ENCODE measurements at regions of chr21 and their contacts with region 1.

Region 1: GRCh38 chr21:28336314-28336713 is 656.4 kb downstream of the LTN1 start:
- ATAC-seq: peak in 3 of 8 experiments; percentile 32 to 54 (median 41)
- H3K4me3 ChIP-seq: no peak overlapping the region
- H3K27ac ChIP-seq: no peak overlapping the region
- H3K4me1 ChIP-seq: no peaks in the 10 kb centered on the region

Region 2: GRCh38 chr21:26850108-26850643 is 1486.1 kb before region 1 on chr21:
- in situ Hi-C with region 1: loop called in 3 of 9 experiments (anchors 25 kb)
- ATAC-seq: no peak
- H3K4me3 ChIP-seq: no peak overlapping the region
- H3K27ac ChIP-seq: no peak overlapping the region
- H3K4me1 ChIP-seq: peaks cover 2 to 6% of the 10 kb centered on the region in 2 donors

Region 3: DNA sequence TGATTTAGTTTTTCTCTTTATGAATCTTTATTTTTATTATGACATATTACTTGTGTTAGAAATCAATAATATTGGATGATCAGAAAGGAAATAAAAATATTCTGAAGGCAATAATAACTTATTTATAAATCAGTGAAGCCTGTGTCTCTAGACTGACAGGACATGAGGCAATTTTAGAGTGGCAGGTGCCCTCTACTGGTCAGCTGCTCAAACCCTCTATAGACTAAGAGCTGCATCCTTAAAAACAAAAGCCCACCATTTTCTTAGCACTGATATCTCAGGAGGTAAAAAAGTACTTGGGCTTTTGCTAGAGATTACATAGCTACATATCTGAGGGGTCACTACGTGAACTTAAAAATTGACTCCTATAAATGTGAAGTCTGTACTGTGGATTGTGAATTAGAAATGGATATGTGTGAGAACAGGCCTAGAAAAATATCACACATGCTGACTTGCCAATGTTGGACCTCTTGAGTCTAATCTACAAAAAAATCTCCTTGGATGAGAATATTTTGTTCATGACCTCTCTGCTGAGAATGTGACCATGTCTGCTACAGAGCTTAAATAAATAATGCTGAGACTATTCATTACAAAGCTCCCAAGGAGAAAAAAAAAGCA is 771.5 kb before region 1 on chr21:
- in situ Hi-C with region 1: loop called in 1 of 9 experiments (anchors 25 kb)
- ATAC-seq: peak; percentile 64 to 91 (median 77)
- H3K4me3 ChIP-seq: no peak overlapping the region
- H3K27ac ChIP-seq: no peak overlapping the region
- H3K4me1 ChIP-seq: peaks cover 10 to 13% of the 10 kb centered on the region in 2 donors

Region 4: DNA sequence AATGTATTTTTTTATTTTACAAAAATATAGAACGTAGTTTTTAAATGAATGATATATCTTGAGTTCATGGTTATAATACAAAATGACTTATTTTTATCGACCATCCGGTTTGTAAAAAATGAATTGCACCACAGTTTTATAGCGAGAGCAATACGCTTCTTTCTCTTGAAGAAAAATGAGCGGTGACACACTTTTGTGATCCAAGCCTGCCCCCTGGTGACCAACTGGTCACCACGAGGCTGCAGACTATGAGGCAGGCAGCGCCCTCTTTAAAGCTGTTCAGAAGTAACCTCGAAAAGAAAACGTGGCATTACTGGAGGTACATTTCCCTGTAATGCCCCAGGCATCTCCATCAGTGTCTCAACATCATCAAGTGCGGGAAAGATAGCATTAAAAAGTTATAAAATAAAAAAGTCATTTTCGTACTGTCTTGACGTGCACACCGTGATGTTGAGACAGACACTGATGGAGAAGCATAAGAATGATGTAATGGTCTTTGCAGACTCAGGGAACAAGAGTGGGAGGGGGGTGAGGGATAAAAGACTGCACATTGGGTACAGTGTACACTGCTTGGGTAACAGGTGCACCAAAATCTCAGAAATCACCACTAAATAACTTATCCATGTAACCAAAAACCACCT is 635.2 kb before region 1 on chr21:
- in situ Hi-C with region 1: loop called in 3 of 9 experiments (anchors 10 to 25 kb)
- ATAC-seq: peak; percentile 82 to 98 (median 91)
- H3K4me3 ChIP-seq: peak overlapping the region in 2 of 5 donors; percentile 13 to 20
- H3K27ac ChIP-seq: no peak overlapping the region
- H3K4me1 ChIP-seq: peaks cover 0 to 2% of the 10 kb centered on the region in 2 donors

Region 5: GRCh38 chr21:27796106-27796505 is 540.2 kb before region 1 on chr21:
- in situ Hi-C with region 1: loop called in 1 of 9 experiments (anchors 10 kb)
- ATAC-seq: peak in 1 of 8 experiments; percentile 43
- H3K4me3 ChIP-seq: no peak overlapping the region
- H3K27ac ChIP-seq: no peak overlapping the region
- H3K4me1 ChIP-seq: no peaks in the 10 kb centered on the region

Region 6: GRCh38 chr21:28069450-28069923 is 266.8 kb before region 1 on chr21:
- in situ Hi-C with region 1: loop called in 2 of 9 experiments (anchors 25 kb)
- ATAC-seq: peak in 1 of 8 experiments; percentile 82
- H3K4me3 ChIP-seq: no peak overlapping the region
- H3K27ac ChIP-seq: no peak overlapping the region
- H3K4me1 ChIP-seq: peaks cover 0 to 3% of the 10 kb centered on the region in 2 donors